HCT116 (cell line): ENCODE measurements at regions of chr3 and their contacts with region 1.

Region 1: DNA sequence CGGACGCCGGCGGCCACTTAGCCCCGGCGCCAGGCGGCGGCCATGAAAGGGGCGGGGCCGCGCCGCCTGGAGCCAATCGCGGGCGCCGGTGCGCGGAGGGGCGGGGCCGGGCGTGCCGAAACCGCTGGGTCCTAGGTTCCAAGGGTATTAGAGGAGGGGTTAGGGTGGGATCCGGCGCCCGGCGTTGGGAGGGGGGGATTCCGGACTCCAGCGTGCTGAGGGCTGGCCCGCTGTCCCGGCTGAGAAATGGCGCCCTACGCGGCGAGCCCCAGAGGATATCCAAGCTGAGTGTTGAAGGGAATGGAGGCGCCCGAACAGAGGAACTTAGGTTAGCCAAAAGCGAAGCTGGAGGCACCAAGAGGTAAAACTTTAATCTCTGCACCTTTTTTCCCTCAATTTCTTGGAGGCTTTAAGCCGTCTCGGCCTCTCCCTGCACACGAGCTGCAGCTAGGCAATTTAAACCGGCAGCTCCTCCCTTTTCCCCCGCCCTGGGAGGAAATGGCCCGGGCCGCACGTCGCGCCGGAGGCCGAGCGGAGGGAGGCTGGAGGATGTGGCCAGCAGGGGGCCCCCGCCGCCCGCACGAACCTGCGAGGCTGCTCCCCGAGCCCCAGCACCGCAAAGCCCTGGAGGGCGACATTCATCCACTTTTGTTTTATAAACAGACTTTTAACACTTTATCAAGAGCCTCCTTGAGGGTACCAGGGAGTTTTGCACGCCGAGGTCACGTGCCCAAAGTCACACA is at the start of gene XXYLT1:
- DNase-seq: peak; percentile 74
- ATAC-seq: peak; percentile 81
- H3K4me3 ChIP-seq: peak within 1 kb of the TSS; percentile 63 to 74
- H3K27ac ChIP-seq: peak within 1 kb of the TSS; percentile 77
- H3K4me1 ChIP-seq: peaks cover 12 to 25% of the 10 kb centered on the region in 2 experiments
- H3K27me3 ChIP-seq: no peaks in the 10 kb centered on the region
- CTCF ChIP-seq: peak; percentile 87 to 100 (median 93)
- POLR2A ChIP-seq: no peak
- RAD21 ChIP-seq: peak; percentile 100
- total RNA-seq, gene XXYLT1: 10.9 TPM

Region 2: GRCh38 chr3:194671900-194672808 is 599.1 kb before region 1 on chr3 and contains the start of gene LSG1:
- CTCF ChIA-PET with region 1: interaction called, 20 read pairs
- POLR2A ChIA-PET with region 1: no interaction called
- RAD21 ChIA-PET with region 1: interaction called in 1 of 2 experiments, 4 read pairs
- intact Hi-C with region 1: no loop called
- DNase-seq: peak; percentile 95
- ATAC-seq: peak; percentile 93
- H3K4me3 ChIP-seq: peak within 1 kb of the TSS; percentile 89 to 95
- H3K27ac ChIP-seq: peak within 1 kb of the TSS; percentile 43
- H3K4me1 ChIP-seq: peaks cover 7 to 19% of the 10 kb centered on the region in 2 experiments; a peak in 3 of 4 replicates
- H3K27me3 ChIP-seq: no peaks in the 10 kb centered on the region; the same call in 1 of the 2 replicates
- CTCF ChIP-seq: no peak
- POLR2A ChIP-seq: peak; percentile 26
- RAD21 ChIP-seq: no peak
- total RNA-seq, gene LSG1: 39.7 TPM

Region 3: DNA sequence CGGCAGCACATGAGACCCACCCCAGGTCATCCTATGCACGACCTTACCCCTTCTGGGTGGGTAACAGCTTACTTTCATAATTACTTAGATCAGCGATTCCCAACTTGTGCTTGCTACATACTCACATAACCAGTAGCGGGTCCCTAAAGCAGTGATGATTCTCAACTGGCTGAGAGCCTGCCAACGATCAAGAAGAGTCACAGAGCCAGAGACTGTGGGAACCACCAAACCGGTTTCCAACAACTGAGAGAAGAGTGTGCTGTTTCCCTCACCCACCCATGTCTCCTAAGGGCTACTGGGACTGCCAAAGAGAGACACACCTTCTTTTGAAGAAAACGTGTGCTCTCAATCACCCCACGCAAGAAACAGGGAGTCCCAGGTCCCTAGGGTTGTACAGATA is 11.7 kb after region 1 on chr3:
- CTCF ChIA-PET with region 1: interaction called, 15 read pairs
- POLR2A ChIA-PET with region 1: no interaction called
- RAD21 ChIA-PET with region 1: no interaction called
- intact Hi-C with region 1: no loop called
- DNase-seq: no peak
- ATAC-seq: no peak
- H3K4me3 ChIP-seq: no peak overlapping the region
- H3K27ac ChIP-seq: no peak overlapping the region
- H3K4me1 ChIP-seq: no peaks in the 10 kb centered on the region
- H3K27me3 ChIP-seq: no peaks in the 10 kb centered on the region
- CTCF ChIP-seq: no peak
- POLR2A ChIP-seq: no peak
- RAD21 ChIP-seq: no peak

Region 4: DNA sequence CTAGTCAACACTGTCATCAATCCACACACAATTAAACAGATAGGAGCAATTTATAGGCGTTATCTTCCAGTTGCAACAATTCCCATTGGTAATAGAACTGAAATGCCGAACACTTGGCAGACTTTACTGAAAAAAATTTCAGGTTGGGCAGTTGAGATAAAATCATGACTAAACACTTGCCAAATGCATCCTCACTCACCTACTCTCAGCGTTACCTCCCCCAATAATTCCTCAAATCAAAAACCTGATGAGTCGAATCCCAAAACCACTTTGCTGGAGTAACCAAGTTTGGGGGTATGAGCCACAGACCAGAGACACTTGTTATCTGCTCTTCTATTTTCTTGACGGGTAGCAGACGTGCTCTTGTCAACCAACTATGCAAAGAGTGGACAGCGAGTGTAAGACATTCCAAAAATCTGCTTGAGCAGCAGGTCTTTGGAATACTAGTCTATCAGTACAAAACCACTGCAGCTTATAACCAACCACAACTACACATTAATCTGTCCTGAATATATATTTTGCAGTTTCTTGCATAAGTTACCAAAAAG is 241.6 kb after region 1 on chr3:
- CTCF ChIA-PET with region 1: interaction called, 10 read pairs
- POLR2A ChIA-PET with region 1: no interaction called
- RAD21 ChIA-PET with region 1: interaction called in 1 of 2 experiments, 3 read pairs
- intact Hi-C with region 1: no loop called
- DNase-seq: no peak
- ATAC-seq: no peak
- H3K4me3 ChIP-seq: no peak overlapping the region
- H3K27ac ChIP-seq: no peak overlapping the region
- H3K4me1 ChIP-seq: no peaks in the 10 kb centered on the region
- H3K27me3 ChIP-seq: no peaks in the 10 kb centered on the region
- CTCF ChIP-seq: no peak
- POLR2A ChIP-seq: no peak
- RAD21 ChIP-seq: no peak

Region 5: DNA sequence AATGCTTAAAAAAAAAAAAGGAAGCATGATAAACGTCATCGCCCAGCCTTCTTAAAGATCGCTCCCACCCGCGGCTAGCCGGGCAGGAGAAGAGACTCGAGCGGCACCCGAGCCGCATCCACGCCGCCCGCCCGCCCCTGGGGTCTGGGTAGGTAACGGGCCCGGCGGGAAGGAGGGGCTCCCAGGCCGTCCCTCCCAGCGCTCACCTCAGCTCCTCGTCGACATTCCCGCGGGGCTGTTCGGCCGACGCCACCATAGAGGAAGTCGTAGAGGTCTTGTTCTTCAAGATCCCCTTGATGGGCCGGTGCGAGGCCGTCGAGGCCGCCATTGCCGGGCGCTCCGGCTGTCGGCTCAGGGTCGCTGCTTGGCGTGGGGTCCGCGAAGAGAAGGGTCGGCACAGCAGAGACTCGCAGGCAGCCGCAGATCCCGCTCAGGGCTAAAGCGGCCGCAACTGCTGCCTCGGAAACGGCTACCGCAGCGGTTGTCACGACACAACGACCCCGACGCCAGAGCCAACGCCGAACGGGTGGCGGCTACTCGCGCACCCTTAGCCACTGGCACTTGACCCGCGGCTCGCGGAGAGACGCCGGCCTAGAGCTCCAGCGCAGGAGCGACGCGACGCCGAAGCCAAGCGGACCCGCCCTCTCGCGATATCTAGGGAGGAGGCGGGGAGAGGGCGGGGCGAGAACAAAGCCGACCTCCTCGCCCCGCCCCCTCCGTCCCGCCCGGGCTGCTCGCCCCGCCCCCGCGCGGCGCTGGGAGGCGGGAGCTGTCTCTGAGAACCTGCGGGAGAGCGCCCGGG is 271.6 kb after region 1 on chr3 and contains the start of gene PPP1R2:
- CTCF ChIA-PET with region 1: interaction called, 15 read pairs
- POLR2A ChIA-PET with region 1: interaction called, 10 read pairs
- RAD21 ChIA-PET with region 1: interaction called in 1 of 2 experiments, 3 read pairs
- intact Hi-C with region 1: no loop called
- DNase-seq: peak; percentile 83
- ATAC-seq: peak; percentile 90
- H3K4me3 ChIP-seq: peak within 1 kb of the TSS; percentile 74 to 76
- H3K27ac ChIP-seq: peak within 1 kb of the TSS; percentile 51
- H3K4me1 ChIP-seq: peaks cover 18 to 36% of the 10 kb centered on the region in 2 experiments
- H3K27me3 ChIP-seq: no peaks in the 10 kb centered on the region
- CTCF ChIP-seq: no peak
- POLR2A ChIP-seq: peak; percentile 91
- RAD21 ChIP-seq: no peak
- total RNA-seq, gene PPP1R2: 46.1 TPM